ENCODE measurements at regions of chr6 and their contacts with region 1.

Region 1: DNA sequence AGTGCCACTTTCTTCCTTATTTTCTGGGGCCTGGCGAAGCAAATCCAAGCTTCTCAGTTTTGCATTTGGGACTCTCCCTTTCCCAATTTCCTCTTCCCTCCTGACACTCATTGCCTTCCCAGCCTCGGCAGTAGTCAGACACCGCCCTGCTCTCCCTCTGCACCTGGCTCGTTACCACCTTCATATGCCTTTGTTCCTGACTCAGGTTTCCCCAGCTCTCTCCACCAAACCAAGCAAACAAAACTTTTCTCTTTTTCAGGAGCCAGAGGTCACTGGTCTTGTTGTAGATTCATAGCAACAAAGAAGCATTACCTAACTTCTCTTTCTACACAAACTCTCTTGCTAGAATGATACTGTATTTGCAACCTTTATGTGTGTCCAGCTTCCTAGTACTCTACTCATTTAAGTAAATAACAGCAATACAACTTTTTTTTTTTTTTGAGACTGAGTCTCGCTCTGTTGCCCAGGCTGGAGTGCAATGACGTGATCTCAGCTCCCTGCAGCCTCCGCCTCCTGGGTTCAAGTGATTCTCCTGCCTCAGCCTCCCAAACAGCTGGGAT is 9.0 kb upstream of the ZC3H12D start:
- DNase-seq: no peak
- H3K4me3 Mint-ChIP-seq: peak overlapping the region; percentile 1
- H3K27ac Mint-ChIP-seq: peak overlapping the region; percentile 97
- H3K4me1 Mint-ChIP-seq: peaks cover 79% of the 10 kb centered on the region
- H3K27me3 Mint-ChIP-seq: no peaks in the 10 kb centered on the region

Region 2: DNA sequence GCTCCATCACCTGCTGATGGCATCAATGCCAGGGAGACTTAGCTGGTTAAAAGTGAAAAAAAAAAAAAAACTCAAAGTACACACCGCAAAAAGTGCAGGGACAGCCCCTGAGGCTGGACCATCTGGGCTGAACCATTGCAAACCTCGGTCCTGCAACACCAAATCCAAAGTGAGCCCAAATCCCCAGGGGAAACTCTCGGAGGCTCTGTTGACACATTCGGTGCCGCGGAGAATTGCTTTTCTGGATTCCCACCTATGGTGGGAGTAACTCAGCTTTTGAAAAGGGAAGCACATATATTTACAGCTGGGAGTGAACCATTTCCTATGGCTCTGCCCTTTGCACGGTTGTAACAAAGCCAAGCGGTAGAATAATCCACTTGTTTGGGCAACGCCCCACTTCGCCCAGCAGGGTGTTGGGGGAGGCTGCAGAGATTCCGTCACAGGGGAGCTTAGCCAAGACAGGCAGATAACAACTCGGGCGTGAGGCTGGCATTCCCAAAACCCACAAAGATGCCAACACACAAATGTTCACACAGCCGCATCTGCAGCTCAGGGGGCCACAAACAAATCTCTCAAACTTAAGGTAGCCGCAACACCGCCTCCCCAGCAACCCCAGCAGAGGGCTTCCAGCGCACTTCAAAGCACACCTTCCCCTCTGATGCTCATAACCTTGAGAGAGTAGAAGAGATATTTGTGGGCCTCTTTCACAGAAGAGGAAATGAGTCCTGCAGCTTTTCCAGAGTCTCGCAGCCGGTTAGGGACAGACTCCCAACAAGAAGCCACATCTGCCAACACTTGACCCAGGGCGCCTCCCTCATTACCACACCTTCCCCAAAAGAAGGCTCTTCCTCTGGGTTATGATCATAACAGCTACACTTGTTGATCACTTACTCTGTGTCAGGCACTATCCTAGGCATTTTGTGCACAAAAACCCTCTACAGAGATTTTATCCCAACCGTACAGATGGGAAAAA is 20.5 kb before region 1 on chr6:
- CTCF ChIA-PET with region 1: interaction called, 7 read pairs
- POLR2A ChIA-PET with region 1: interaction called, 21 read pairs
- intact Hi-C with region 1: no loop called
- DNase-seq: no peak
- H3K4me3 Mint-ChIP-seq: peak overlapping the region; percentile 21
- H3K27ac Mint-ChIP-seq: peak overlapping the region; percentile 47
- H3K4me1 Mint-ChIP-seq: peaks cover 80% of the 10 kb centered on the region
- H3K27me3 Mint-ChIP-seq: no peaks in the 10 kb centered on the region

Region 3: GRCh38 chr6:149508485-149508884 is 14.6 kb after region 1 on chr6:
- CTCF ChIA-PET with region 1: interaction called, 11 read pairs
- POLR2A ChIA-PET with region 1: interaction called, 40 read pairs
- intact Hi-C with region 1: loop called (anchors 1 kb)
- DNase-seq: peak; percentile 68
- H3K4me3 Mint-ChIP-seq: peak overlapping the region; percentile 50
- H3K27ac Mint-ChIP-seq: peak overlapping the region; percentile 95
- H3K4me1 Mint-ChIP-seq: peaks cover 70% of the 10 kb centered on the region
- H3K27me3 Mint-ChIP-seq: no peaks in the 10 kb centered on the region